Activated CD4-positive, alpha-beta memory T cell treated with anti-CD3 and anti-CD28 coated beads for 36 hours (primary cell): ENCODE measurements at regions of chr18 and their contacts with region 1.

Region 1: GRCh38 chr18:61502472-61502871 is 169.2 kb downstream of the CDH20 start:
- DNase-seq: no peak
- H3K4me3 Mint-ChIP-seq: no peak overlapping the region
- H3K27ac Mint-ChIP-seq: no peak overlapping the region
- H3K4me1 Mint-ChIP-seq: no peaks in the 10 kb centered on the region
- H3K27me3 Mint-ChIP-seq: peaks cover 10% of the 10 kb centered on the region

Region 2: DNA sequence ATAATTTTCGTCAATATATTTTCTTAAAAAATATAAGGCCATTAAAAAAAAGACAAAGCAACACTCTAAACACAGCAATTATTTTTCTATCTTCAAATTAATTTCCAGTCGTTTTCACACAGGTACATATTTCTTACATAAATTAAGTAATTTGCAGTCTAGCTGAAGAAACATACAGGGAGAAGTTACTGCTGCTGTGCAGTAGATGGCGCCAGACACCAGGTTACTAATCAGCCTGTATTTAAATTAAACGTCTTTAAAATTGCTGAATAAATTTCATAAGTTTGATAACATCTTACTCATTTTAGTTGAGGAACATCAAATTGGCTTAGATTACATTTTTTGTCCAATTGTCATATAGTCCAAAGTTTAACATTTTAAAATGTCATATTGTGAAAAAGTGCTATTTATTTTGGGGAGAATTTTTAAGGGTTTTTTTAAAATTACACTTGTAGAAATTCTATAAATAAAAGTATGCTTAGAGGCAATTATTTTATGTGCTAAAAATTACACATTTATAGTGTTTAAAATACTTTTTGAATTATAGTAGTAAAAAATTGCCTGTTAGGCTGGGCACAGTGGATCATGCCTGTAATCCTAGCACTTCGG is 1514.3 kb before region 1 on chr18:
- CTCF ChIA-PET with region 1: interaction called, 28 read pairs
- POLR2A ChIA-PET with region 1: no interaction called
- intact Hi-C with region 1: loop called (anchors 2 kb)
- DNase-seq: peak; percentile 64
- H3K4me3 Mint-ChIP-seq: no peak overlapping the region
- H3K27ac Mint-ChIP-seq: no peak overlapping the region
- H3K4me1 Mint-ChIP-seq: no peaks in the 10 kb centered on the region
- H3K27me3 Mint-ChIP-seq: peaks cover 12% of the 10 kb centered on the region

Region 3: GRCh38 chr18:61085761-61086160 is 416.7 kb before region 1 on chr18:
- CTCF ChIA-PET with region 1: interaction called, 4 read pairs
- POLR2A ChIA-PET with region 1: no interaction called
- intact Hi-C with region 1: loop called (anchors 2 kb)
- DNase-seq: no peak
- H3K4me3 Mint-ChIP-seq: no peak overlapping the region
- H3K27ac Mint-ChIP-seq: no peak overlapping the region
- H3K4me1 Mint-ChIP-seq: no peaks in the 10 kb centered on the region
- H3K27me3 Mint-ChIP-seq: no peaks in the 10 kb centered on the region

Region 4: DNA sequence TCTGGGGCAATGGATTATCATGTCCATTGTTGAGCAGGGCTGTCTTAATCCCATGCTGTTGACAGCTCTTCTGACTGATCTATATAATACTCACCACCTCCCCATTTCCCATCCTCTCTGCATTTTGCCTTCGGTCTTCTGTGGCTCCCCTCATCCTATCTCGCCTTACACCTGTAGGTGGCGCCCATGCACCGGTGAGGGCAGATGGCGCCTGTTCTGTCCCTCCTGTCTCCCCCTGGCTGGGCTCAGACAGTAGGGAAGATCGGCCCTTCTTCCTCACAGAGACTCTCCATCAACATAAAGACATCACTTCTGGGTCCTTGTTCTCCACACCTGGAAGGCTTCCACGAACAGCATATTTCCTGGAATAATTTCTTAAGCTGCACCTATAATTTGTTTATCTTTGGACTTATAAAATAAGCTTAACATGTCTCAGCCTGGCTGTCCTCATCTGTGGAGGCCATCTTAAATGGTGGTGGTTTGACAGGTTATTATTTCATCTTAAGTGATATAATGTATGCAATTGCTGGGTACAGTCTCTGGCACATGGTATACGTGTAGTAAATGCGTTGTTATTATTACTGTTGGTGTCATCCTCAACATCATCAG is 180.1 kb before region 1 on chr18:
- CTCF ChIA-PET with region 1: interaction called, 6 read pairs
- POLR2A ChIA-PET with region 1: no interaction called
- intact Hi-C with region 1: loop called (anchors 5 kb)
- DNase-seq: peak; percentile 57
- H3K4me3 Mint-ChIP-seq: no peak overlapping the region
- H3K27ac Mint-ChIP-seq: no peak overlapping the region
- H3K4me1 Mint-ChIP-seq: no peaks in the 10 kb centered on the region
- H3K27me3 Mint-ChIP-seq: no peaks in the 10 kb centered on the region